Transverse colon (tissue), 4 donors: ENCODE measurements at regions of chr21 and their contacts with region 1.

Region 1: GRCh38 chr21:21076491-21076890 is 78.3 kb downstream of the NCAM2 start:
- DNase-seq: no peak
- H3K4me3 ChIP-seq: no peak overlapping the region
- H3K27ac ChIP-seq: no peak overlapping the region
- H3K4me1 ChIP-seq: no peaks in the 10 kb centered on the region
- H3K27me3 ChIP-seq: no peaks in the 10 kb centered on the region
- CTCF ChIP-seq: no peak
- EP300 ChIP-seq: no peak
- POLR2A ChIP-seq: no peak

Region 2: DNA sequence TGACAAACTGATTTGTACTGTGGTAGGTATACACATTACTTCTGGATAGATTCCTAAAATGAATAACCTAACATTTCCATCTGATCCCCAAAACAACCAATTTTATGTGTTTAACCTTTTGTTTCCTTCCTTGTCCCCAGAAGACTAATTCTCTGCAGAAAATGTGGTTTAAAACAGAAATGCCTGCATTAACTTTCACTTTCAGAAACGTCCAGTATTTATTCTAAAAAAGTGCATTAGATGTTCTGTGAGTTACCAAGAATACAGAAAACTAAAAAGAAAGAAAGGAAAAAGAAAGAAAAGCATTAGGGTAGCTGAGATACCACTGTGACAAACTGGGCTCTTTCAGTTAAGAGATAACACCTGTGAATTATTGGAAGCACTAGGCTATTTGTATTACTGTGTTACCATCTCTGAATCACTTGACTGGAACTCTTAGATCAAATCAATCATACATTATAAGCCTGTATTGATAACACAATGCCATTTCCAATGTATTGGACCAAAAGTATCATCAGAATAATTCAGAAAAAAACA is 99.4 kb after region 1 on chr21:
- in situ Hi-C with region 1: no loop called
- intact Hi-C with region 1: no loop called
- DNase-seq: no peak
- H3K4me3 ChIP-seq: no peak overlapping the region
- H3K27ac ChIP-seq: no peak overlapping the region
- H3K4me1 ChIP-seq: no peaks in the 10 kb centered on the region
- H3K27me3 ChIP-seq: no peaks in the 10 kb centered on the region
- CTCF ChIP-seq: no peak
- EP300 ChIP-seq: no peak
- POLR2A ChIP-seq: no peak

Region 3: DNA sequence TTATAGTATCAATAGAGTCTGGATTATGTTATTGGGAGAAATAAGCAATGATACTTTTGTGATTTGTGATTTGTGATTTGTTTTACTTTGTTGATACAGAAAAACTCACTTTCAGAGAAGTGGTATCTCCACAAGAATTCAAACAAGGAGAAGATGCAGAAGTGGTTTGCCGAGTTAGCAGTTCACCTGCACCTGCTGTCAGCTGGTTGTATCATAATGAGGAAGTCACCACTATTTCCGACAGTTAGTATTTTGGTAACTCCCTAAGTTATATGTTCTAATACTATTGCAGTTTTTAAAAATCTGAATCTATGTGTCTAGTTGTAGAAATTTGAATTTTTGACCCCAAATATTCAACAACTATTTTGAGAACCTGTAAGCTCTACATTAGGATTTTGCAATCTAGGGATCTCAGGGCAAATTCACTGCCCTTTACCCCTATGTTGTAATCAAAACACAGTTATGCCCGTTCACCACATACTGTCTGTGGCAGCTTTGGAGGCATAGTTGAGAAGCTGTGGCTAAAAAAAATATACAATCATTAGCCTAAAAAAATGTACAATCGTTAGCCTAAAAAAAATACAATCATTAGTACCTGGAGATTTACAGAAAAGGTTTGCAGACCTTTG is 209.8 kb after region 1 on chr21:
- in situ Hi-C with region 1: no loop called
- intact Hi-C with region 1: loop called (anchors 5 kb)
- DNase-seq: no peak
- H3K4me3 ChIP-seq: no peak overlapping the region
- H3K27ac ChIP-seq: no peak overlapping the region
- H3K4me1 ChIP-seq: no peaks in the 10 kb centered on the region
- H3K27me3 ChIP-seq: no peaks in the 10 kb centered on the region
- CTCF ChIP-seq: no peak
- EP300 ChIP-seq: no peak
- POLR2A ChIP-seq: no peak